Activated T-helper 1 cell treated with anti-CD3 and anti-CD28 coated beads, Interleukin-12 subunit alpha, Interleukin-12 subunit beta, Interleukin-2, Interleukin-4 antibody, amounts not matched to agents 30 ng/mL and 10 ng/mL and 1 ng/mL, durations not matched to agents 14 hours and 24 hours and 36 hours (primary cell): ENCODE measurements at regions of chr10 and their contacts with region 1.

Region 1: DNA sequence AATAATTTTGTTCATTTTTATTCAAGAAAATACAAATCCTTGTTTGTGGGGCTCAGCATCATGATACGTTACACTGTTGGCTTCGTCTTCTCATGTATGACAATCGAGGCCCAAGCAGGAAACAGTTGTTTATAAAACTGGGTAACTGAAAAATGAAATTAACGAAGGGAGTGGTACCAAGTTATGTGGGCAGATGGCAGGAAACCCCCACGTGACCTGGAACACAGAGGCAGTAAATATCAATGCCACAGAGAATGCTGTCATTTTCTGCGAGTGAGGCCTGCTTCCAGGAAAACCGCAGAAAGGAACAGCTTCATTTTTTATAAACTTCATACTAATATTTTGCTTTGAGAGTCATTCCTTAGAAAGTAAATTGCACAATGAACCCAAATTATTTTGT is 201.0 kb upstream of the ADARB2 start:
- DNase-seq: peak; percentile 54
- H3K4me3 Mint-ChIP-seq: peak overlapping the region; percentile 68
- H3K27ac Mint-ChIP-seq: peak overlapping the region; percentile 90
- H3K4me1 Mint-ChIP-seq: peaks cover 30% of the 10 kb centered on the region
- H3K27me3 Mint-ChIP-seq: no peaks in the 10 kb centered on the region

Region 2: GRCh38 chr10:1643161-1643907 is 295.0 kb before region 1 on chr10:
- intact Hi-C with region 1: loop called (anchors 2 kb)
- DNase-seq: peak; percentile 34
- H3K4me3 Mint-ChIP-seq: peak overlapping the region; percentile 28
- H3K27ac Mint-ChIP-seq: peak overlapping the region; percentile 92
- H3K4me1 Mint-ChIP-seq: peaks cover 17% of the 10 kb centered on the region
- H3K27me3 Mint-ChIP-seq: peaks cover 6% of the 10 kb centered on the region

Region 3: GRCh38 chr10:1920127-1920526 is 18.2 kb before region 1 on chr10:
- intact Hi-C with region 1: loop called (anchors 1 kb)
- DNase-seq: no peak
- H3K4me3 Mint-ChIP-seq: no peak overlapping the region
- H3K27ac Mint-ChIP-seq: no peak overlapping the region
- H3K4me1 Mint-ChIP-seq: peaks cover 19% of the 10 kb centered on the region
- H3K27me3 Mint-ChIP-seq: peaks cover 2% of the 10 kb centered on the region